ENCODE measurements at regions of chr4 and their contacts with region 1.

Region 1: GRCh38 chr4:63831590-63832155 is 577.6 kb downstream of the TECRL start:
- DNase-seq: no peak
- H3K4me3 Mint-ChIP-seq: no peak overlapping the region
- H3K27ac Mint-ChIP-seq: no peak overlapping the region
- H3K4me1 Mint-ChIP-seq: no peaks in the 10 kb centered on the region
- H3K27me3 Mint-ChIP-seq: no peaks in the 10 kb centered on the region

Region 2: DNA sequence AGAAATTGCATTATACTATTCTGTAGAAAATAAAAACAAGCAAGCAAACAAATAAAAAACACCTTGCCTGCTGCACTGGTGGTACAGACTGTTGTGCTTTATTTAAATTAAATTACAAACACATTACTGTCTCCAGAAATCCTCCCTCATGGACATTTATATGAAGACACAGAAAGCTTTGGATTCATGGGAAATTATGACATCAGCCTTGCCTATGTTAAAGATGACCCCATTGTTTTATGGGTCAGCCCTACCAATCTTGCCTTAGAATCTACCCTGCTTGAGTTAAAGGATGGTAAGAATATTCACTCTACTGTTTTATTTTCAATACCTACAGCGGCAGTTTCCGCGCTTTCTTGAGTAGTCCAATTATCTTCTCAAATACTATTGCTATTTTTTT is 802.3 kb before region 1 on chr4:
- intact Hi-C with region 1: no loop called
- DNase-seq: no peak
- H3K4me3 Mint-ChIP-seq: no peak overlapping the region
- H3K27ac Mint-ChIP-seq: no peak overlapping the region
- H3K4me1 Mint-ChIP-seq: no peaks in the 10 kb centered on the region
- H3K27me3 Mint-ChIP-seq: no peaks in the 10 kb centered on the region

Region 3: DNA sequence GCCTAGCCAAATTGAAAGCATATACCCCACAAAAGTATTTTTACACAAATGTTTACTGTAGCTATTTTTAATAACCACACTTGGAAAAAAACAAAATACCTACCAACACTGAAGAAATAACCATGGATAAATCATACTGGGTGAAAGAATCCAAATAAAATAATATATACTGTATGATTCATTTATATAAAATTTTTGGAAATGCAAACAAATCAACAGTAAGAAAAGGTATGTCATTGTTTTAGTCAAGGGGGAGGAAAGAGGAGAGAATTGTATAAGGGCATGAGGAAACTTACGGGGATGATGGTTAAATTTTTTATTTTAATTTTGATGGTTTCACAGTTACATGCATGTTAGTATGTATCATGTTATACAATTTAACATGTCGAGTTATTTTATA is 19.8 kb after region 1 on chr4:
- intact Hi-C with region 1: loop called (anchors 1 kb)
- DNase-seq: no peak
- H3K4me3 Mint-ChIP-seq: no peak overlapping the region
- H3K27ac Mint-ChIP-seq: no peak overlapping the region
- H3K4me1 Mint-ChIP-seq: no peaks in the 10 kb centered on the region
- H3K27me3 Mint-ChIP-seq: no peaks in the 10 kb centered on the region

Measured in activated T-helper 2 cell treated with anti-CD3 and anti-CD28 coated beads, Interferon-gamma antibody, Interleukin-2, Interleukin-4, amounts not matched to agents 10 μg/mL and 5 μg/mL and 100 μg/mL, durations not matched to agents 14 hours and 24 hours and 36 hours (primary cell).